ENCODE measurements at regions of chr4 and their contacts with region 1.

Region 1: DNA sequence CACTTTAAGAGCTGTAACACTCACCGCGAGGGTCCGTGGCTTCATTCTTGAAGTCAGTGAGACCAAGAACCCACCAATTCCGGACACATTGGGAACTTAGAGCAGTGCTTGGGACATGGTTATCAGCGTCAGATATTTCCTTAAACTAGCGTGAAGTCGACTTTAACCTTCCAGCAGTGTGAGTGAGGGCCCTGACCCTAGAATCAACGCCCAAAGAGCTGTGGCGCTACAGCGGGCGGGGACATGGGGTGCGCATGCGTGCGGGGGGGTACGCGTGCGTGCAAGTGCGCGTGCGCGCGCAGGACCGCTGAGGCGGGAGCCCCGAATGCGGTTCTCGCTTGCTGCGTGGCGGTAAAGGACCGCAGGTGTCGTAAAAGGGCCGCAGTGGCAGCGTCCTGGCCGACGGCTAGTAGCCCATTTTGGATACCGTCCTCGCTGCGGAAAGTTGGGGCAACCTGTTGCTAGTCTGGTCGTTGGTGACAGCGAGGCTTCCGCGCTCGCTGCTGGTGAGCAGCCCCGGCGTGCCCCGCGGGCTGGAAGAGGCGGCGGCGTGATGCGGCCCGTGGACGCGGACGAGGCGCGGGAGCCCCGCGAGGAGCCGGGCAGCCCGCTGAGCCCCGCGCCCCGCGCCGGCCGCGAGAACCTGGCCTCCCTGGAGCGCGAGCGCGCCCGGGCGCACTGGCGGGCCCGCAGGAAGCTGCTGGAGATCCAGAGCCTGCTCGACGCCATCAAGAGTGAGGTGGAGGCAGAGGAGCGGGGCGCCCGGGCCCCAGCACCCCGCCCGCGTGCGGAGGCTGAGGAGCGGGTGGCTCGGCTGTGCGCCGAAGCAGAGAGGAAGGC is 19.8 kb upstream of the S100P start:
- DNase-seq: peak; percentile 80
- ATAC-seq: peak; percentile 92
- H3K4me3 ChIP-seq: peak overlapping the region; percentile 74
- H3K27ac ChIP-seq: peak overlapping the region; percentile 45
- H3K4me1 ChIP-seq: peaks cover 6% of the 10 kb centered on the region; the same call in 1 of the 2 replicates
- H3K27me3 ChIP-seq: no peaks in the 10 kb centered on the region
- CTCF ChIP-seq: no peak
- EP300 ChIP-seq: peak in 1 of 2 experiments; percentile 27; a peak in 1 of 4 replicates
- POLR2A ChIP-seq: peak; percentile 92
- RAD21 ChIP-seq: no peak

Region 2: GRCh38 chr4:6709230-6710114 is 35.6 kb after region 1 on chr4 and contains the start of gene MRFAP1L1:
- CTCF ChIA-PET with region 1: interaction called, 7 read pairs
- POLR2A ChIA-PET with region 1: interaction called, 6 read pairs
- RAD21 ChIA-PET with region 1: interaction called, 22 read pairs
- SMC1A ChIA-PET with region 1: interaction called, 4 read pairs
- in situ Hi-C with region 1: no loop called
- intact Hi-C with region 1: loop called (anchors 2 kb)
- DNase-seq: peak; percentile 85
- ATAC-seq: peak; percentile 85
- H3K4me3 ChIP-seq: peak within 1 kb of the TSS; percentile 89
- H3K27ac ChIP-seq: peak within 1 kb of the TSS; percentile 81
- H3K4me1 ChIP-seq: peaks cover 14% of the 10 kb centered on the region
- H3K27me3 ChIP-seq: no peaks in the 10 kb centered on the region
- CTCF ChIP-seq: peak in 2 of 3 experiments; percentile 7 to 10; a peak in 1 of 6 replicates
- EP300 ChIP-seq: no peak
- POLR2A ChIP-seq: peak; percentile 80
- RAD21 ChIP-seq: no peak
- polyA plus RNA-seq, gene MRFAP1L1: 30.6 to 34.5 TPM

Measured in GM12878 (cell line).